ENCODE measurements at regions of chr14 and their contacts with region 1.

Region 1: DNA sequence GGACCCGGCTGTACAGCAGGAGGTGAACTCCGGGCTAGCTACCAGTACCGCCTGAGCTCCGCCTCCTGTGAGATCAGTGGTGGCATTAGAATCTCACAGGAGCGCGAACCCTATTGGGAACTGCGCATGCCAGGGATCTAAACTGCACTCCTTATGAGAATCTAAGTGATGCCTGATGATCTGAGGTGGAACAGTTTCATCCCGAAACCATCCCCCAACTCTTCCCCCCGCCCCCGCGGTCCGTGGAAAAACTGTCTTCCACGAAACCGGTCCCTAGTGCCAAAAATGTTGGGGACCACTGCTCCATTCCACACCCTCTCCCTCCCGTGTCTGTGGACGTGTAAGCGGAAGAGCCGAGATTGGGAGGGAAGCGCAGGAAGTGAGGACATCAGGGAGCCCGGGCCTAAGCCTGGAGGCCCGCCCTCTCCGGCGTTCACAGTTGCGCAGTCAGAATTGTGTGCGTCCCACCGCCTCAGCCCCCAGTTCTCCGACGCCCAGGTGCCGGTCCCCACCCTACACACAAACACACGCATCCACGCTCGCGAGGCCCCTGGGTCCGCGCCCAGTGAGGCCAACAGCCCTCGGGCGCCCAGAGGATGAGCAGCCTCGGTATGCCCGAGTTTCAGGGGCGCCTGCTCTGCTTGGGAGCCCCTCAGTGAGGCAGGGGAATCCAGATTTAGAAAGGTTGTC is 1.8 kb upstream of the RNASE4 start:
- DNase-seq: peak; percentile 89 to 95 (median 93)
- ATAC-seq: peak; percentile 91 to 94 (median 92)
- H3K4me3 ChIP-seq: peak overlapping the region; percentile 47 to 95 (median 75)
- H3K27ac ChIP-seq: peak overlapping the region; percentile 96 to 100 (median 100)
- H3K4me1 ChIP-seq: peaks cover 0 to 37% (median 19%) of the 10 kb centered on the region in 12 donors
- H3K27me3 ChIP-seq: no peaks in the 10 kb centered on the region
- CTCF ChIP-seq: peak in 3 of 12 donors; percentile 0 to 39 (median 30)
- POLR2A ChIP-seq: peak; percentile 8 to 91

Region 2: DNA sequence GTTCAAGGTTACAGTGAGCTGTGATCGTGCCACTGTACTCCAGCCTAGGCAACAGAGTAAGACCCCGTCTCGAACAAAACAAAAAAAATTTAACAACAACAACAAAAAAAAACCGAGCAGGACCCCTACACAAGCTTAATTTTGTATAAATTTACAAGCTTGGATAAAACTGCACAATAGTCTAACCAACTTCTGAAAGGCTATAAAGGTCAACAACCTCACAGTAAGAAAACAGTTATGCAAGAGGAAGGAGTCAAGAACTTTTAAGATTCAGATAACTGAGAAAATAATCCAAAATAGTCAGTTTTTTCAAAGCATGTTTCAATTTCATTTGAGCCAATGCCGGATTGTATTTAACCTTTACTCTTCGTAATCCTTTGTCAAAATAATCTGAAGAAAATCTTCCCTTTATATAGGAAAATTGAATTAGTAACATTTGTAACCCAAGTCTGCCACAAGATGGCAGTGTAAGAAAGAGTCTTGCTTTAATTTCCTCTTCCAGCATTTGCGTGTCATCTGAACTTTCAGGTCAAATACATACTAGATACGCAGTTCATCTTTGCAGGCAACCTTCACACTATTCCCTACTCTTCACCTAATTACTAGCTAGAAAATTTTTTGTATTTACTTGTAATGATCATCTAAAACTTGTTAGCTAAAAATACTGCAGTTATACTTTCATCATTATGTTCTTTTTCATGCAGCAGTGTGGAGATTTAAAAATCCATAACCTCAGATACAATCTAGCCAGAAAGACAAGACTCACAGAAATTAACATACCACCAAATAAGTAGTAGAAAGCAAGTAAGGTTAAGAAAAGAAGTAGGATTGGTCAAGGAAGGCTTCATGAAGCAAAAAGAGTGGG is 355.3 kb before region 1 on chr14:
- intact Hi-C with region 1: loop called in 7 of 10 experiments (anchors 2 to 5 kb)
- DNase-seq: peak in 1 of 5 donors; percentile 33
- ATAC-seq: peak in 2 of 4 donors; percentile 48 to 58
- H3K4me3 ChIP-seq: no peak overlapping the region
- H3K27ac ChIP-seq: peak overlapping the region in 3 of 12 donors; percentile 6 to 51 (median 40)
- H3K4me1 ChIP-seq: peaks cover 0 to 29% (median 13%) of the 10 kb centered on the region in 12 donors
- H3K27me3 ChIP-seq: no peaks in the 10 kb centered on the region
- CTCF ChIP-seq: peak; percentile 67 to 88 (median 80)
- POLR2A ChIP-seq: no peak

Region 3: GRCh38 chr14:20413045-20413799 is 269.4 kb before region 1 on chr14 and contains the start of gene TEP1:
- intact Hi-C with region 1: loop called in 7 of 10 experiments (anchors 5 to 10 kb)
- DNase-seq: peak; percentile 90 to 94 (median 94)
- ATAC-seq: peak; percentile 92 to 98 (median 97)
- H3K4me3 ChIP-seq: peak within 1 kb of the TSS; percentile 58 to 98 (median 80)
- H3K27ac ChIP-seq: peak within 1 kb of the TSS; percentile 79 to 98 (median 94)
- H3K4me1 ChIP-seq: peaks cover 0 to 41% (median 9%) of the 10 kb centered on the region in 12 donors
- H3K27me3 ChIP-seq: no peaks in the 10 kb centered on the region
- CTCF ChIP-seq: peak in 1 of 12 donors; percentile 28
- POLR2A ChIP-seq: peak in 1 of 2 donors; percentile 83
- total RNA-seq, gene TEP1: 4.1 to 31.3 (median 9.8) TPM

Region 4: DNA sequence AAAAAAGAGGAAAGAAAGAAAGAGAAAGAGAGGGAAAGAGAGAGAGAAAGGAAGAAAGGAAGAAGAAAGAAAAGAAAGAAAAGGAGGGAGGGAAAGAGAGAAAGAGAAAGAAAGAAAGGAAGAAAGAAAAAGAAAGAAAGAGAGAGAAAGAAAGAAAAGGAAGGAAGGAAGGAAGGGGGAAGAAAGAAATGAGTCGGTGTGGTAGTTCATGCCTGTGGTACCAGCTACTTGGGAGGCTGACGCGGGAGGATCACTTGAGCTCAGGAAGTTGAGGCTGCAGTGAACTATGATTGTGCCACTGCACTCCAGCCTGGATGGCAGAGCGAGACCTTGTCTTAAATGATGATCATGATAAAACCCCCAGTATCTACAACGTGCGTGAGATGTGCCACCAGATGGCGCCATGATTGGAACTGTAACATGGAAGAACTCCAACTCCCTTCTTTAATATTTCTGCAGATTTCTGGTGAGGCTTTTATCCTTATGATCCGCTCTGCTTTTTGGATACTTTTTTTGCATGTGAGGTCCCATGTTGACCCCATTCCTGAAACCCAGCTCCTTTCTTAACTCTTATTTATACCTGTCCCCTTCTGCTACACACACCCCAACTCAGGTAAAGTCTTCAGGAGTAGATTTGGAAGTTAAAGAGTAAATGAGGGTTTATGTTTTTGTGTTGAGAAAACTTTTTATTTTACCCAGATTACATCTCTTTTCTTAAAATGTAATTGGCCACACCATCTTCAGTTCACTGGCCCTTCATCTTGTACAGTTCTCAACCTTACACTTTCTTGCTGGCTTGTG is 151.6 kb before region 1 on chr14:
- intact Hi-C with region 1: loop called in 1 of 10 experiments (anchors 10 kb)
- DNase-seq: peak; percentile 35 to 78 (median 49)
- ATAC-seq: no peak
- H3K4me3 ChIP-seq: no peak overlapping the region
- H3K27ac ChIP-seq: no peak overlapping the region
- H3K4me1 ChIP-seq: no peaks in the 10 kb centered on the region
- H3K27me3 ChIP-seq: peaks cover 0 to 5% (median 0%) of the 10 kb centered on the region in 9 donors
- CTCF ChIP-seq: peak; percentile 45 to 75 (median 58)
- POLR2A ChIP-seq: no peak

Region 5: GRCh38 chr14:20632682-20633428 is 49.7 kb before region 1 on chr14:
- intact Hi-C with region 1: loop called in 7 of 10 experiments (anchors 5 kb)
- DNase-seq: no peak
- ATAC-seq: peak; percentile 26 to 83 (median 68)
- H3K4me3 ChIP-seq: peak overlapping the region in 10 of 12 donors; percentile 1 to 48 (median 37)
- H3K27ac ChIP-seq: no peak overlapping the region
- H3K4me1 ChIP-seq: peaks cover 0 to 34% (median 16%) of the 10 kb centered on the region in 12 donors
- H3K27me3 ChIP-seq: peaks cover 0 to 68% (median 15%) of the 10 kb centered on the region in 9 donors
- CTCF ChIP-seq: no peak
- POLR2A ChIP-seq: no peak

Region 6: GRCh38 chr14:20707622-20708021 is 25.0 kb after region 1 on chr14:
- intact Hi-C with region 1: no loop called
- DNase-seq: no peak
- ATAC-seq: no peak
- H3K4me3 ChIP-seq: no peak overlapping the region
- H3K27ac ChIP-seq: peak overlapping the region in 7 of 12 donors; percentile 1 to 71 (median 25)
- H3K4me1 ChIP-seq: peaks cover 0 to 15% (median 2%) of the 10 kb centered on the region in 12 donors
- H3K27me3 ChIP-seq: no peaks in the 10 kb centered on the region
- CTCF ChIP-seq: no peak
- POLR2A ChIP-seq: no peak

Region 7: DNA sequence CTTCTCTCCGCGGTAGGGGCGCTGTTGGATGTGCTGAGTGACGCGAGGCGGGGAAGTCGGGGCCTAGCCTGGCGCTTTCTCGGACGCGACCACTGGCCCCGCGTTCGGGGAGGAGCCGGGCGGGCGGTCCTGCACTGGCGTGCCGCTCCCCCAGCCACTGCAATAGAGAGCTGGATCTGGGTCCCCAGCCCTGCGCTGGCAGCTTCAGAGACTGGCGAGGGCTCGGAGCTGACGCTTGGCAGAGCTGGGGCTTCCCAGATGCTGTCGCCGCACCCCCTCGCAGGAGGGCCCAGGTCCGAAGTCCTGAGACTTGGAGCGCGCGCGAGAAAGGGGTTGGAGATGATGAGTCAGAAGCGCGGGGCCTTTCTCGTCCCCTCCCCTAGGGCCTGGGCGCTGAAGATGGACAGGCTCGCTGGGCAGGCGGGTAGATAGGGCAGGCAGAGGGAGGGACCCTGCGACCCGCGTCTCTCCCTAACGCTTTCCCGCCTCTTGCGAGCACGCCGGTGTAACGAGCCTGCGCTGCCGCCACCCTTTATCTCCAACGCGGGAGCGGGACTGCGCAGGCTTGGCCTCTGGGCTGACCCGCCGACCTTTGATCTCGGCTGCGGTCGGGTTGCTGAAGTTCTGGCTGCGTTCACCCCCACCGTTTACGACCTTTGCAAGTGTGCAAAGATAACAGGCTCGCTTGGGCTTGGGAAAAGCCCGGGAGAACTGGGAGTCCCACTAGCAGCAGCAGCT is 421.3 kb after region 1 on chr14:
- intact Hi-C with region 1: loop called in 3 of 10 experiments (anchors 5 to 10 kb)
- DNase-seq: peak; percentile 97 to 99 (median 97)
- ATAC-seq: peak; percentile 94 to 97 (median 96)
- H3K4me3 ChIP-seq: peak overlapping the region; percentile 61 to 88 (median 76)
- H3K27ac ChIP-seq: peak overlapping the region; percentile 95 to 100 (median 97)
- H3K4me1 ChIP-seq: peaks cover 0 to 53% (median 37%) of the 10 kb centered on the region in 12 donors
- H3K27me3 ChIP-seq: no peaks in the 10 kb centered on the region
- CTCF ChIP-seq: peak; percentile 57 to 93 (median 80)
- POLR2A ChIP-seq: peak in 1 of 2 donors; percentile 91

Region 8: DNA sequence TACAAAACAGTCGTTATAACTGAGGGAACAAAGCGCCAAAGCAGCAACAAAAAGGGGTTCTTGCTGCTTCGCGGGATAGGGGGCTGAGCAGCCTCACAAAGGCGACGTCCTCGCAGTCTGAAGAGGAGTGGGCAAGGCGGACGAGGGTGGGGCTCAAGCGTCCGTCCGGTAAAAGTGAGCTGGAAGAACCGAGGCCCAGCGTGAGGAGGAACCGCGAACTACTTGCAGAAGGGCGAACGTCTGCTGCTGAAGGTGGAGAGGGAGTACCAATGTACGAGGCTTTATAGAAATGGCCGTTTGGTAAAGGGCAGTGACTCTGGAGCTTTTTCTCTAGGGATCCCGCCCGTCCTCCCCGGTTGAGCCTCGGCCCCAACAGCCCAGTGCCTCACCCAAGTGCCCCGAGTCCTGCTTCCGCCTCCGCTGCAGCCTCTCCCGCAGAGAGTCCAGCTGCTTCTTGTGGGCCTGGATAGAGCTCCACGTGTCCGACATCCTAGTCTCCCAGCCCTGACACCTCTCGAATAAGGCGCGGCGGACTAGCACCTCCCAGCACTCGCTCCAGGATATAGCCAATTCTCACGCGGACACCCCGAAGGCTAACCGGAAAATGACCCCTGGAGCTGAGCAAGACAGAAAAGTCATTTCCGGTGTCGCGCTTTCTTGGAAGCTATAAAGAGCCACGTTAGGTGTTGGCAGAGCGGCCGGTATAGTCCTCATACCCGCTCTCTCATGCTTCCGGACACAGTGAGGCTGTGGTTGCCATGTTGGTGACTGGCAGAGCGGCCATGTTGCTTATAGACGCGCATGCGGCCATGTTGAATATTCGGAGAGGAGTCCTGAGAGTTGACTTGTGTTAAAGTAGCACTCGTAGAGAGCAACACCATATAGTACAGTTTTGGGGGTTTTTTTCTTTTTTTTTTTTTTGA is 828.4 kb after region 1 on chr14 and contains the start of gene METTL3:
- intact Hi-C with region 1: loop called in 1 of 10 experiments (anchors 5 kb)
- DNase-seq: peak; percentile 96 to 99 (median 98)
- ATAC-seq: peak; percentile 99 to 100 (median 100)
- H3K4me3 ChIP-seq: peak within 1 kb of the TSS; percentile 64 to 94 (median 82)
- H3K27ac ChIP-seq: peak within 1 kb of the TSS; percentile 55 to 92 (median 82)
- H3K4me1 ChIP-seq: peaks cover 0 to 28% (median 13%) of the 10 kb centered on the region in 12 donors
- H3K27me3 ChIP-seq: no peaks in the 10 kb centered on the region
- CTCF ChIP-seq: peak in 1 of 12 donors; percentile 7
- POLR2A ChIP-seq: no peak
- total RNA-seq, gene METTL3: 21.0 to 37.0 (median 25.2) TPM

Measured in heart left ventricle (tissue), 16 donors.